ENCODE measurements at regions of chr11 and their contacts with region 1.

Region 1: DNA sequence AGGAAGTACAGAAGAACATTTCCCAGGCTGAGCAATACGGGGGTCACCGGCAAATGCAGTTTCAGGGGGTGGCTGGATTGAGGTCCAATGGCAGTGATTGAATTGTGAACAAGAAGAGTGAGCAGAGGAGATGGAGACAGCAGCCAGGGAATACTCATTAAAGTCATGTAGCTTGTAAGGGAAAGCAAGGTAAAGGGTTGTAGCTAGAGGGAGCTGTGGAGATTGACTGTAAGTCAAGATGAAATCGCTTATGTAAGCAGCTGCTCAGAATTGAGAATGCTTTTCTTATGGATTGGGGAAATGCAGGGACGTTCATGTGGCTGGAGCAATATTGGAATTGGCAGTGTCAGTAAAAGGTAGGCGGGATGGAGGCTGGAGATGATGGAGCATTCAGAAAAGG is 111.4 kb upstream of the TBCEL start:
- DNase-seq: peak in 1 of 2 experiments; percentile 47
- H3K4me3 ChIP-seq: no peak overlapping the region
- H3K4me3 Mint-ChIP-seq: no peak overlapping the region
- H3K27ac Mint-ChIP-seq: no peak overlapping the region
- H3K4me1 ChIP-seq: peaks cover 4% of the 10 kb centered on the region; the same call in 1 of the 2 replicates
- H3K4me1 Mint-ChIP-seq: peaks cover 6% of the 10 kb centered on the region
- H3K27me3 ChIP-seq: 0 out of 2 replicates have a peak, but pooled peaks cover 3% of the 10 kb centered on the region
- H3K27me3 Mint-ChIP-seq: peaks cover 21% of the 10 kb centered on the region
- CTCF ChIP-seq: peak; percentile 62 to 78

Region 2: GRCh38 chr11:120151536-120151935 is 761.0 kb before region 1 on chr11:
- CTCF ChIA-PET with region 1: no interaction called
- POLR2A ChIA-PET with region 1: no interaction called
- intact Hi-C with region 1: no loop called
- DNase-seq: no peak
- H3K4me3 ChIP-seq: no peak overlapping the region
- H3K4me3 Mint-ChIP-seq: no peak overlapping the region
- H3K27ac Mint-ChIP-seq: no peak overlapping the region
- H3K4me1 ChIP-seq: no peaks in the 10 kb centered on the region
- H3K4me1 Mint-ChIP-seq: no peaks in the 10 kb centered on the region
- H3K27me3 ChIP-seq: no peaks in the 10 kb centered on the region
- H3K27me3 Mint-ChIP-seq: peaks cover 30% of the 10 kb centered on the region
- CTCF ChIP-seq: no peak

Region 3: DNA sequence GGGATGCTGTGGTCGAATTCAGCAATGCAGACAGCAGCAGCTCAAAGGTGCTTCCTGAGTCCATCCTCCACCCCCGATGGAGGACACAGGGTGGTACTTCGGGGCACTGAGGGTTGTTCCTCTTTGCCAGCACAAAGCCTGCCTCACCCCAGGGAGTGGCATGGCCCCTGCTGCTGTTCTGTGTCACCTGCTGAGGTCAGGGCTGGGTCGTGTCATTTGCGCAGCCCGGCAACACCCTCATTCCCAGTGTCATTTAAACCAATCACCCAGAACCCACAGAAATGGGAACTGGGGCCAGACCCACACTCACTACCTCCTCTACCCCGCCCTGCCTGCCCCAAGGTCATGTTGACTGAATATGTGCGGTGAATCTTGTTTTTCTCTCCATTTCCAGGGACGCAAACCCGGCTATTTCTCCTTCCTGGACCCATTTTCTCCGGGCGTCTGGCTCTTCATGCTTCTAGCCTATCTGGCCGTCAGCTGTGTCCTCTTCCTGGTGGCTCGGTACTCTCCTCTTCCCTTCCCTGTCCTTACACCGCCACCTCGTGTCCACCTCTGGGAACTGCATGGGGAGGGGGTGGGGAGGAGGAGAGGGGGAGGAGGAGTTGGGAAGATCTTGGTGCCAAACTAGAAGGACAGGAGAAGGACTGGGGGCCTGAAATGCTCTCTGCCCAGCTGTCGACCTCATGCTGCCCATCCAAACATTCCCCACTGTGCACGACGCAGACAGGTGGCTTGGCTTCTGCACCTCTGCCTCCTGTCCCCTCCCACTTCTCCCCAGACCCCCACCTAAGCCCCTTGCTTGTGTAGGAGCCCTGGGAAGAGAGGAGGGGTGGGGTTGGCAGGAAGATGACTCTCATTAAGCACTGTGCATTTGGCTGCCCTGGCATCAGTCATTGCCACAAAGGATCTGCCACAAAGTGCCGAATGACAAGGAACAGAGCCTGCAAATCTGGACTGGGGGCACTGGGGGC is 40.2 kb after region 1 on chr11:
- CTCF ChIA-PET with region 1: interaction called, 4 read pairs
- POLR2A ChIA-PET with region 1: no interaction called
- intact Hi-C with region 1: loop called (anchors 1 kb)
- DNase-seq: peak; percentile 91 to 93
- H3K4me3 ChIP-seq: peak overlapping the region; percentile 13; the same call in 1 of the 2 replicates
- H3K4me3 Mint-ChIP-seq: peak overlapping the region; percentile 67
- H3K27ac Mint-ChIP-seq: no peak overlapping the region
- H3K4me1 ChIP-seq: peaks cover 5% of the 10 kb centered on the region; the same call in 1 of the 2 replicates
- H3K4me1 Mint-ChIP-seq: peaks cover 7% of the 10 kb centered on the region
- H3K27me3 ChIP-seq: peaks cover 1% of the 10 kb centered on the region; the same call in 1 of the 2 replicates
- H3K27me3 Mint-ChIP-seq: peaks cover 10% of the 10 kb centered on the region
- CTCF ChIP-seq: peak; percentile 97 to 99

Measured in Caco-2 (cell line).